PC-3 (cell line): ENCODE measurements at regions of chr12 and their contacts with region 1.

Region 1: DNA sequence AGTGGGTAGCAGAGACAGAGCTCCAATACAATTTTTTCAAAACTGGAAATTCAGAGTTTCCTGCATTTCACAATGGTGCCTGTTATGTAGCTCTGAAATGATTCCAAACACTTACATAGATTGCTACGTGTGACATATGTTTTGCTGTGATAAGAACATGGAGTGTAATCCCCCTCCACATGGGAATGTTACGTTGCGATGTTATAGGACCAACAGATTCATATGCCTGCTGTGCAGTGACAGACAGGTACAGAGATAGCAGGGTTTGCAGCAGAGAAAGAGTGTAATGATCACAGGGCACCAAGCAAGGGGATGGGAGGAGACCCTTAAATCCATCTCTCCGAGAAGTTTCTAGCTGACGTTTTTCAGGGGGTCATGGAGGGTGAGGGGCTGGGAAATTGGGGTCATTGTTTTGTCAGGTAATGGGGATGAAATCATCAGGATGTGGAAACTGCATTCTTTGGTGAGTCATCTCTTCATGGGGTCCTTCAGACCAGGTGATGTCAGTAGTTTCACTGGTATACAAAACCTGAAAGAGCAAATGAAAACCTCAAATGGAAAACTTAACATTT is 76.6 kb upstream of the OSBPL8 start:
- DNase-seq: peak; percentile 74
- ATAC-seq: peak; percentile 28
- H3K4me3 ChIP-seq: no peak overlapping the region
- H3K27ac ChIP-seq: peak overlapping the region; percentile 87
- H3K4me1 ChIP-seq: peaks cover 49% of the 10 kb centered on the region
- H3K27me3 ChIP-seq: no peaks in the 10 kb centered on the region
- CTCF ChIP-seq: no peak

Region 2: DNA sequence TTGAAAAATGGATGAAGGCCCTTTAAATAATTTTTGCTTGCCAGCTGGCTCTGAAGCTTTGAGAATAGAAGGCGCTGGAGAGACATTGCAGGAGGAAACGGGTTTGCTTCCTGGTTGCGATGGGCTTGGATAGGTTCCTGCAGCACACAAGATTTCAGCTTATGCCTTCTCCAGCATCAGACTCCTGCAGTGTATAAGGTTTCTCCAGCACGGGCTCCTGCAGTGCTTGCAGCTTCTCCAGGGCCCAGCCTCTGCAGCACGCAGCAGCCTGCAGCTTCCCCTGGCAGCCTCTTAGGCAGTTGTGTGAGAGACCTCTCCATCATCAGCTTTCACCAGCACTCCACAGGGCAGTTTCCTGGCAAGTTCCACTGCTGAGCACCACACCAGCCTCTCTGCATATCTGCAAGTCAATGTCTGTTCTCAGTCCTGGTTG is 49.1 kb after region 1 on chr12:
- CTCF ChIA-PET with region 1: no interaction called
- POLR2A ChIA-PET with region 1: no interaction called
- intact Hi-C with region 1: loop called (anchors 5 kb)
- DNase-seq: no peak
- ATAC-seq: no peak; the same call in 1 of the 2 replicates
- H3K4me3 ChIP-seq: no peak overlapping the region
- H3K27ac ChIP-seq: no peak overlapping the region
- H3K4me1 ChIP-seq: peaks cover 11% of the 10 kb centered on the region
- H3K27me3 ChIP-seq: no peaks in the 10 kb centered on the region
- CTCF ChIP-seq: no peak

Region 3: GRCh38 chr12:76704693-76705092 is 68.5 kb after region 1 on chr12:
- CTCF ChIA-PET with region 1: no interaction called
- POLR2A ChIA-PET with region 1: no interaction called
- intact Hi-C with region 1: loop called (anchors 5 kb)
- DNase-seq: peak; percentile 68
- ATAC-seq: peak; percentile 74
- H3K4me3 ChIP-seq: no peak overlapping the region
- H3K27ac ChIP-seq: 0 out of 2 replicates have a peak overlapping the region, but pooled peaks have one; percentile 8
- H3K4me1 ChIP-seq: peaks cover 16% of the 10 kb centered on the region
- H3K27me3 ChIP-seq: no peaks in the 10 kb centered on the region
- CTCF ChIP-seq: no peak

Region 4: GRCh38 chr12:76763743-76764675 is 127.8 kb after region 1 on chr12 and contains the start of gene ZDHHC17:
- CTCF ChIA-PET with region 1: interaction called, 5 read pairs
- POLR2A ChIA-PET with region 1: no interaction called
- intact Hi-C with region 1: loop called (anchors 2 kb)
- DNase-seq: peak; percentile 94
- ATAC-seq: peak; percentile 90
- H3K4me3 ChIP-seq: peak within 1 kb of the TSS; percentile 100
- H3K27ac ChIP-seq: peak within 1 kb of the TSS; percentile 86
- H3K4me1 ChIP-seq: peaks cover 15% of the 10 kb centered on the region; the same call in 1 of the 2 replicates
- H3K27me3 ChIP-seq: no peaks in the 10 kb centered on the region
- CTCF ChIP-seq: no peak
- total RNA-seq, gene ZDHHC17: 35.3 and 42.4 TPM in 2 replicates

Region 5: GRCh38 chr12:76790564-76791552 is 154.7 kb after region 1 on chr12:
- CTCF ChIA-PET with region 1: interaction called, 15 read pairs
- POLR2A ChIA-PET with region 1: no interaction called
- intact Hi-C with region 1: loop called (anchors 2 kb)
- DNase-seq: peak; percentile 57
- ATAC-seq: peak; percentile 65
- H3K4me3 ChIP-seq: no peak overlapping the region
- H3K27ac ChIP-seq: no peak overlapping the region
- H3K4me1 ChIP-seq: peaks cover 5% of the 10 kb centered on the region; the same call in 1 of the 2 replicates
- H3K27me3 ChIP-seq: no peaks in the 10 kb centered on the region
- CTCF ChIP-seq: peak; percentile 74